ENCODE measurements at regions of chr16 and their contacts with region 1.

Region 1: GRCh38 chr16:77675464-77676324 is 46.6 kb upstream of the NUDT7 start:
- DNase-seq: peak; percentile 32
- H3K4me3 ChIP-seq: no peak overlapping the region
- H3K27ac ChIP-seq: no peak overlapping the region
- H3K4me1 ChIP-seq: no peaks in the 10 kb centered on the region
- H3K27me3 ChIP-seq: peaks cover 24% of the 10 kb centered on the region
- CTCF ChIP-seq: peak; percentile 90

Region 2: DNA sequence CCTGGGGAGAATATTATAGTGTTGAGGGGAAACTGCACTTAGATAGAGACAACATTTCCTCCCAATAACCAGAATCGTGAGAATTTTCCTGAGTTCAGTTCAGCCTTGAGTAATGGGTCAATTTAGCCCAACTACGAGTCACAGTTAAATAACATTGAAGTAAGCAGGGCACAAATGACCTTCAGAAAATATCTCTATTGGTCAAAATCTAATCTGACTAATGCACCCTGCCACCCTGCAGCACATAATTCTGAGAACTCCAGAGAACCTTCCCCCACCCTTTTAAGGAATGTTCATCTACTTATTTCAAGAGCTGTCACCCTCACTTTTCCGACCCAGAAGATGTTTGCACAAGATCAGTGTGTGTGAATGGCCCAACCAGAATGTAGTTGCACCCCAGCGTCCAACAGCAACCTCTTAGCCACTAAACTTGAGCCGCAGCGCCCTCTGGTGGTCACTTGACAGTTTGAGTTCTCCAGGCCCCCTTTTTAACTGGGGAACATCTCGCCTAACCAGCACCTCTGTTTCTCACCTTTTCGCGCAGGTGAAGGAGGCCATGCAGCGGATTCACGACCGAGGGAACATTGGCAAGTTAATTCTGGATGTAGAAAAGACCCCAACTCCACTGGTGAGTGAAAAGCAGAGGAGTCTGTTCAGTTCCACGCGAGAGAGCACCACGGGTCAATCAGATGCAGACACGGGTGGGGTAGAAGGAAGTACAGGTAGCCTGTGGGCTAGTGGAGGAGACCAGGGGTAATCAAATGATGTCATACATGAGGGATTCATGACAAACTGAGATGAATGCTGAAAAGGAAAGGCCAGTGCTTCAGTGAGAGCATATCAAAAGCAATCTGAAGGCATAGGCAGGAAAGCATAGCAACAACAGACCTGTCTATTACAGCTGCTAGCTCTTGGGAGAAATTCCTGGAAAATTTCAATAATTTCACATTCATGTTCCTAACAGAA is 295.9 kb after region 1 on chr16:
- intact Hi-C with region 1: loop called (anchors 5 kb)
- DNase-seq: peak; percentile 79
- H3K4me3 ChIP-seq: no peak overlapping the region
- H3K27ac ChIP-seq: no peak overlapping the region
- H3K4me1 ChIP-seq: peaks cover 4% of the 10 kb centered on the region
- H3K27me3 ChIP-seq: peaks cover 4% of the 10 kb centered on the region
- CTCF ChIP-seq: peak; percentile 85

Region 3: DNA sequence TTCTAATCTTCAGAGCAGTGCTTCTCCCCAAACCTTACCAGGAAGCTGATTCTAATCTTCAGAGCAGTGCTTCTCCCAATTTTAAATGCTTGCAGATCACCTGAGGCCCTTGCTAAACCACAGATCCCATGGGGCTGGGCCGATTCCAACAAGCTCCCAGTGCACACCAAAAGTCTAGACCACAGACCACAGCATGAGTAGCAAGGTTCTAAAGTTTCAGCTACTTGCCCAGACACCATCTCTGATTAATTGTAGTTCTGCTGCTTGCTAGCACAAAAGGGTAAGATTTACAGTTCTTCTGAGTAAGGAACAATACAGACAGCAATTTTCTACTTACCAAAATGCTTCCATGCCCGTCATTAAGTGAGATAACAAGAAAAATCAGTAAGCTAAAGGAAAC is 358.8 kb after region 1 on chr16:
- intact Hi-C with region 1: no loop called
- DNase-seq: no peak
- H3K4me3 ChIP-seq: no peak overlapping the region
- H3K27ac ChIP-seq: no peak overlapping the region
- H3K4me1 ChIP-seq: no peaks in the 10 kb centered on the region
- H3K27me3 ChIP-seq: peaks cover 4% of the 10 kb centered on the region
- CTCF ChIP-seq: no peak

Measured in left ventricle myocardium inferior (tissue), 1 donor.